Sciatic nerve (tissue), 2 donors: ENCODE measurements at regions of chr2 and their contacts with region 1.

Region 1: DNA sequence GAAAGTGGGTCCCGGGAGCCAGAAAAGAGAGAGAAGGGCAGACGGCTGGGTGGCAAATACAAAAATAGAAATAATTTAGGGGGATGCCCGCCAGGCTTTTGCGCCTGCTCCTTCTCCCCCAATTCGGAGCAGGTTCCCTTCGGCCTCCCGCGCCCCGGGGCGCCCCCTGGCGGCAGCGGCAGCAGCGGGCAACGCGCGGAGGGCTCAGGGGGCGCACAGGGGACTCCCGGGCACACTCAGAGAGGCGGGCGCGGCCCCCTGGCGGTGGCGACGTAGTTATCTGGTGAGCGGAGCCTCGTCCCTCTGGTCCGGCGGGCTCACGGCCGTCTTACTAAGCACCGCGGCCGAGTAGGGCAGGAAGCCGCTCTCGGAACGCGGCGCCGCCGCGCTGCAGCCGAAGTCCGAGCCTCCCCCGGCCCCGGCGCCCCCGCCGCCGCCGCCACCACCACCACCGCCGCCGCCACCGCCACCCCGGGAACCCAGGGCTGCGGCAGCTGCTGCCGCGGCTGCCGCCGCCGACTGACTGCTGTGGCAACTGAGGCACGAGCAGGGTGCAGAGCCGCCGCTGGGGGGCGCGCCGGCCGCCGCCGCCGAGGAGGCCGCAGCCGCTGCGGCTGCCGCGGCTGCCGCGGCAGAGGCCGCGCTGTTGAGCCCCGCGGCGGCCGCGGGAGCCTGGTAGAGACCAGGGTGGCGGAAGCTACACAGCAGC is 3.8 kb downstream of the EVX2 start:
- DNase-seq: no peak
- ATAC-seq: no peak

Region 2: DNA sequence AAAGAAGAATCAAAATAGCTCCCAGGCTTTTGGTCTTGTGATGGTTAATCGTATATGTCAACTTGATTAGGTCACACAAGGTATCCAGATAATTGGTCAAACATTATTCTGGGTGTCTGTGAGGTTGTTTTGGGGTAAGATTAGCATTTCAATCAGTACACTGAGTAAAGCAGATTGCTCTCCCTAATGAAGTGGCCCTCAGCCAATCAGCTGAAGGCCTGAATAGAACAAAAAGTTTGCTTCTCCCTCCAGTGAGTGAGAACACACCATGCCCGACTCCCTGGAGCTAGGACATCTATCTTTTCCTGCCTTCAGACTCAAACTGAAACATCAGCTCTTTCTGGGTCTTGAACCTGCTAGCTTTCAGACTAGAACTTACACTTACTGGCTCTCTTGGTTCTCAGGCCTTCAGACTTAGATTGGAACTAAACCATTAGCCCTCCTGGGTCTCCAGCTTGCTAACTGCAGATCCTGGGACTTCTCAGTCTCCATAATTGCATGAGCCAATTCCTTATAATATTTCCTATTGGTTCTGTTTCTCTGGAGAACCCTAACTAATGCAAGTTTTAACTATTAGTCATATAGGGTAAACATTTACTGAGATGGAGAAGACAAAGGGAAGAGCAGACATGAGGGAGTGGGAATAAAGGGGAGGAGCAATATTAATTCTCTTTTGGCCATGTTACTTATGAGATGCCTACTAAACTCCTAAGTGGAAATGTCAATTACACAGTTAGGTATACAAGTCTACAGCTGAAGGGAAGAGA is 103.4 kb before region 1 on chr2:
- intact Hi-C with region 1: no loop called
- DNase-seq: no peak
- ATAC-seq: no peak

Region 3: GRCh38 chr2:176135034-176135440 is 55.1 kb after region 1 on chr2:
- intact Hi-C with region 1: loop called (anchors 2 kb)
- DNase-seq: no peak
- ATAC-seq: no peak

Region 4: GRCh38 chr2:176291809-176292283 is 211.9 kb after region 1 on chr2:
- intact Hi-C with region 1: no loop called
- DNase-seq: no peak
- ATAC-seq: no peak